ENCODE measurements at regions of chr5 and their contacts with region 1.

Region 1: GRCh38 chr5:75574791-75575190 is 36.5 kb upstream of the ANKDD1B start:
- DNase-seq: no peak
- H3K4me3 Mint-ChIP-seq: no peak overlapping the region
- H3K27ac Mint-ChIP-seq: peak overlapping the region; percentile 50
- H3K4me1 Mint-ChIP-seq: peaks cover 10% of the 10 kb centered on the region
- H3K27me3 Mint-ChIP-seq: no peaks in the 10 kb centered on the region

Region 2: DNA sequence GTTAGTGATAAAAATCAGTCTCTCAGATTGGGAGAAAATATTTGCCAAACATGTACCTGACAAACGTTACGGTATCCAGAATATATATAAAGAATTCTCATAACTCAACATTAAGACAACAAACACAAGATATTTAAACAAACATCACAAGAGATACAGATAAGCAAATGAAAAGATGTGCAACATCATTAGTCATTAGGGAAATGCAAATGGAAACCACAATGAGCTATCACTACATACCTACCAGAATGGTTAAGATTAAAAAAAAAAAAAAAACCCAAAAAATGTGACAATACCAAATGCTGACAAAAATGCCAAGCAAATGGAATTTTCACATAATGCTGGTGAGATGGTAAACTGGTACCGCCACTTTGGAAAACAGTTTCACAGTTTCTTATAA is 78.8 kb before region 1 on chr5:
- CTCF ChIA-PET with region 1: no interaction called
- intact Hi-C with region 1: no loop called
- DNase-seq: no peak
- H3K4me3 Mint-ChIP-seq: no peak overlapping the region
- H3K27ac Mint-ChIP-seq: no peak overlapping the region
- H3K4me1 Mint-ChIP-seq: peaks cover 12% of the 10 kb centered on the region
- H3K27me3 Mint-ChIP-seq: no peaks in the 10 kb centered on the region

Region 3: GRCh38 chr5:75524071-75524470 is 50.7 kb before region 1 on chr5:
- CTCF ChIA-PET with region 1: no interaction called
- intact Hi-C with region 1: loop called (anchors 2 kb)
- DNase-seq: peak; percentile 30
- H3K4me3 Mint-ChIP-seq: peak overlapping the region; percentile 12
- H3K27ac Mint-ChIP-seq: peak overlapping the region; percentile 72
- H3K4me1 Mint-ChIP-seq: peaks cover 61% of the 10 kb centered on the region
- H3K27me3 Mint-ChIP-seq: no peaks in the 10 kb centered on the region

Region 4: DNA sequence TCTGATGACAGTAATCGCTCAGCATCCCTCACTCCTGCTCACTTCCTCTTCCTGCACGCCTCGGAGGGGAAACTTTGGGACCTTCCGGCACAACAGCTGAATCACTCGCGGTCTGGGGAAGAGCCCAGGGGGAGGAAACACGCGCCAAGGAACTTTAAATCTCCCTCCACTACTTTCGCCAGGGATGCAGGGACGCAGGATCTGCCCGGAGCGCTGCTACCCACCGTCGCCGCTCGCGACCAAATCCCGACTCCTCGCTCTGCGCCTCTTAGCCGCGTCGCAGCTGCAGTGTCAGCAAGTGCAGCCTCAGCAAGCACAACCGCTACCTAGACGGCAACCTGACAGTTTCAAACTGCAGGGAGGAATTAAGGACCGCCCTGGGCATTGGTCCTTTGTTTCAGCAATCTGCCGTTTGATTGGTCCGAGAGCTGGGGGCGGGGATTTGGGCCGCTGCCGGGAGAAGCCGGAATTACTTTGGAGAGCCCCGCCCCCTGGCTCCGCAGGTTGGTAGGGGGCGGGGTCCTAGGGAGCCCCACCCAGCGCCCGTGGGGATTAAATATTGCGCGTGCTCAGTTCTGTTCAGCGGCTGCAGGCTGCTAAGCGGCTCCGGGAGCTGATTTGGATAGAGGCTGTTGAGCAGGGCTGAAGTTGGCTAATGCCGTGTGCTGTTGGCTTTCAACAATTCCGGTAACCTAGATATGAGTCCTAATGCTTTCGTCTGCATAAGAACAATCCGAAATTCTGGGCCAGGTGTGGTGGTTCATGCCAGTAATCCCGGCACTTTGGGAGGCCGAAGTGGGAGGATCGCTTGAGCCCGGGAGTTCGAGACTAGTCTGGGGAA is 142.5 kb after region 1 on chr5 and contains the start of gene POC5:
- CTCF ChIA-PET with region 1: no interaction called
- intact Hi-C with region 1: no loop called
- DNase-seq: peak; percentile 98
- H3K4me3 Mint-ChIP-seq: peak within 1 kb of the TSS; percentile 99
- H3K27ac Mint-ChIP-seq: peak within 1 kb of the TSS; percentile 99
- H3K4me1 Mint-ChIP-seq: peaks cover 30% of the 10 kb centered on the region
- H3K27me3 Mint-ChIP-seq: no peaks in the 10 kb centered on the region
- total RNA-seq, gene POC5: 17.5 to 17.7 TPM

Measured in activated naive CD4-positive, alpha-beta T cell treated with anti-CD3 and anti-CD28 coated beads for 36 hours (primary cell).